HepG2 (cell line): ENCODE measurements at regions of chr2 and their contacts with region 1.

Region 1: DNA sequence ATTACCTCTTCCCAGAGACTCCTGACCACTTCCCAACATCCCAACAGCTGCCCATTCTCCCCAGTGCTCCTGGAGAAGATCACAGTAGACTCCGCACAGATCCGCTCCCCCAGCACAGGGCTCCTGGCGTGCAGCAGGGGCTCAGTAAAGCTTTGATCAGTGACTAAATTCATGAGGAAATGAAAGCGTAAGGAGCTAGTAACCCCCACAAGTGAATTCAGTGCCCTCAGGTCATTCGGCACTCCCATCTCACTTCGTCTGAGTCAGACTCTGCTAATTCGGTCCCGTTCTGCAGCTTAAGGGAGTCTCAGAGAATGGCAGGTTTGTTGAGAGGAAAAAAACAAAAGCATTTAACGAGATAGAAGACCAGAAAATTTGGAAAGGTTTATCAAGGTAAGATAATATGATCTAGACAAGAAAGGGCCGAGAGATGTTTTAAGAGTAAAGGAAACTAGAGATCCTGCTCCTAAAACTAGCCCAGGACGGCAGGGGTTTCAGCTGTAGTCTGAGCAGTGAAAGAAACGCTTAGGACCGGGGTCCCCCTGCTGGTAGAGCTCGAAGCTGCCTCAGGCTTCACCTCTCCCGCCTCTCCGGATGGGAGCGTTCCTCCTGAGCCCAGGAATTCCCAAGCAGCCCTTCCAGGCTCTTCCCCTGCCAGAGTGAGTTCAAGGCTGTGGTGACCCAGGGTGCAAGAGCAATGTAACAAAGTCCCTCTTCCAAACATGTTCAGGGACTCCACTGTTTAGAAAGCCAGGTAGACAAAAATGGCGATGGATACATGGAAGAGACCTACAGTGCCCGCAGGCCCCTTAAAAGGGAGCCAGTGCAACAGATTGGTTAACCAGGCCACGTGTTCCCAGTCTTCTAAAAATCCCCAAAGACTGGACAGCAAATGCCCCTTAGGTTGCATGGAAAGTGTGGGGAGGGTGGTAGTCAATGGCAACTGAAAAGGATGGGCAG is 127.3 kb downstream of the DNER start:
- DNase-seq: peak; percentile 60
- ATAC-seq: peak; percentile 100
- H3K4me3 ChIP-seq: no peak overlapping the region
- H3K27ac ChIP-seq: no peak overlapping the region
- H3K4me1 ChIP-seq: no peaks in the 10 kb centered on the region
- H3K27me3 ChIP-seq: peaks cover 0 to 4% of the 10 kb centered on the region in 2 experiments; a peak in 1 of 5 replicates
- CTCF ChIP-seq: peak; percentile 92
- EP300 ChIP-seq: no peak
- POLR2A ChIP-seq: no peak
- RAD21 ChIP-seq: peak; percentile 77

Region 2: GRCh38 chr2:227890495-227891079 is 1696.4 kb before region 1 on chr2:
- CTCF ChIA-PET with region 1: interaction called, 4 read pairs
- POLR2A ChIA-PET with region 1: no interaction called
- in situ Hi-C with region 1: no loop called
- intact Hi-C with region 1: loop called (anchors 5 kb)
- DNase-seq: peak; percentile 53
- ATAC-seq: peak; percentile 85
- H3K4me3 ChIP-seq: no peak overlapping the region
- H3K27ac ChIP-seq: no peak overlapping the region
- H3K4me1 ChIP-seq: 0 out of 2 replicates have a peak, but pooled peaks cover 6% of the 10 kb centered on the region
- H3K27me3 ChIP-seq: peaks cover 0 to 3% of the 10 kb centered on the region in 2 experiments; a peak in 1 of 5 replicates
- CTCF ChIP-seq: peak; percentile 71
- EP300 ChIP-seq: no peak
- POLR2A ChIP-seq: no peak
- RAD21 ChIP-seq: no peak

Region 3: GRCh38 chr2:229342376-229342775 is 244.7 kb before region 1 on chr2:
- CTCF ChIA-PET with region 1: interaction called, 8 read pairs
- POLR2A ChIA-PET with region 1: no interaction called
- in situ Hi-C with region 1: loop called (anchors 10 kb)
- intact Hi-C with region 1: no loop called
- DNase-seq: peak; percentile 4
- ATAC-seq: peak; percentile 92
- H3K4me3 ChIP-seq: no peak overlapping the region
- H3K27ac ChIP-seq: no peak overlapping the region
- H3K4me1 ChIP-seq: no peaks in the 10 kb centered on the region
- H3K27me3 ChIP-seq: no peaks in the 10 kb centered on the region
- CTCF ChIP-seq: peak; percentile 73
- EP300 ChIP-seq: no peak
- POLR2A ChIP-seq: no peak
- RAD21 ChIP-seq: no peak

Region 4: GRCh38 chr2:229431327-229431954 is 155.6 kb before region 1 on chr2:
- CTCF ChIA-PET with region 1: interaction called, 18 read pairs
- POLR2A ChIA-PET with region 1: no interaction called
- in situ Hi-C with region 1: loop called (anchors 5 kb)
- intact Hi-C with region 1: loop called (anchors 1 kb)
- DNase-seq: peak; percentile 58
- ATAC-seq: peak; percentile 60; the same call in 2 of the 3 replicates
- H3K4me3 ChIP-seq: no peak overlapping the region
- H3K27ac ChIP-seq: no peak overlapping the region
- H3K4me1 ChIP-seq: no peaks in the 10 kb centered on the region
- H3K27me3 ChIP-seq: 0 out of 5 replicates have a peak, but pooled peaks cover 0 to 2% of the 10 kb centered on the region in 2 experiments
- CTCF ChIP-seq: 0 out of 2 replicates have a peak, but pooled peaks have one; percentile 18
- EP300 ChIP-seq: no peak
- POLR2A ChIP-seq: no peak
- RAD21 ChIP-seq: no peak